A673 (cell line): ENCODE measurements at regions of chr6 and their contacts with region 1.

Region 1: GRCh38 chr6:126446248-126446647 is 106.3 kb downstream of the CENPW start:
- DNase-seq: peak; percentile 1
- H3K4me3 ChIP-seq: no peak overlapping the region
- H3K27ac ChIP-seq: no peak overlapping the region
- H3K4me1 ChIP-seq: no peaks in the 10 kb centered on the region
- H3K27me3 ChIP-seq: no peaks in the 10 kb centered on the region
- CTCF ChIP-seq: no peak

Region 2: GRCh38 chr6:125340991-125341390 is 1105.3 kb before region 1 on chr6:
- CTCF ChIA-PET with region 1: no interaction called
- POLR2A ChIA-PET with region 1: no interaction called
- intact Hi-C with region 1: no loop called
- DNase-seq: no peak
- H3K4me3 ChIP-seq: no peak overlapping the region
- H3K27ac ChIP-seq: no peak overlapping the region
- H3K4me1 ChIP-seq: peaks cover 1% of the 10 kb centered on the region
- H3K27me3 ChIP-seq: no peaks in the 10 kb centered on the region
- CTCF ChIP-seq: no peak

Region 3: DNA sequence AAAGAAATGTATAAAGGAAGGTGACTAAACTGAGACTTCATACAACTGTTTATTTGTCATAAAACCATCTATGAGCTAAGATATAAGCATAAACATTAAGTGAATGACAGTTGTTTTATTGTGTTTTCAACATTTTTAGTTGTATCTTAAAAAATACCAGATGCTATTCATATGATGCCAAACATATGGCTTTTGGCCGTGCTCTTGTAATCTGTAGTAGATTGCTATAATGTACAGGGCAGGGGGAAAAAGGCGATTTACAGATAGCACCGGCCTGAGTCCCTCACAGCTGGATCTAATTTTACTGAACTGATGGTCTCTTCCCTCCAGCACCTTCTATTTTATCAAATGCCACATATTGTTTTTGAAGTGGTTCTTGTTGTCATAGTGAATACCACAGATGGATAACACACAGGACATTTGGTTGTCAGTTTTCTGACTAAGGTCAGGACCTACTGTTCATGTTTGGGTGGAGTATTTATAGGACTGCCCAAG is 58.1 kb before region 1 on chr6:
- CTCF ChIA-PET with region 1: interaction called, 19 read pairs
- POLR2A ChIA-PET with region 1: no interaction called
- intact Hi-C with region 1: no loop called
- DNase-seq: no peak
- H3K4me3 ChIP-seq: no peak overlapping the region
- H3K27ac ChIP-seq: no peak overlapping the region
- H3K4me1 ChIP-seq: no peaks in the 10 kb centered on the region
- H3K27me3 ChIP-seq: no peaks in the 10 kb centered on the region
- CTCF ChIP-seq: no peak